Head of caudate nucleus (tissue), 42 donors: ENCODE measurements at regions of chr11 and their contacts with region 1.

Region 1: DNA sequence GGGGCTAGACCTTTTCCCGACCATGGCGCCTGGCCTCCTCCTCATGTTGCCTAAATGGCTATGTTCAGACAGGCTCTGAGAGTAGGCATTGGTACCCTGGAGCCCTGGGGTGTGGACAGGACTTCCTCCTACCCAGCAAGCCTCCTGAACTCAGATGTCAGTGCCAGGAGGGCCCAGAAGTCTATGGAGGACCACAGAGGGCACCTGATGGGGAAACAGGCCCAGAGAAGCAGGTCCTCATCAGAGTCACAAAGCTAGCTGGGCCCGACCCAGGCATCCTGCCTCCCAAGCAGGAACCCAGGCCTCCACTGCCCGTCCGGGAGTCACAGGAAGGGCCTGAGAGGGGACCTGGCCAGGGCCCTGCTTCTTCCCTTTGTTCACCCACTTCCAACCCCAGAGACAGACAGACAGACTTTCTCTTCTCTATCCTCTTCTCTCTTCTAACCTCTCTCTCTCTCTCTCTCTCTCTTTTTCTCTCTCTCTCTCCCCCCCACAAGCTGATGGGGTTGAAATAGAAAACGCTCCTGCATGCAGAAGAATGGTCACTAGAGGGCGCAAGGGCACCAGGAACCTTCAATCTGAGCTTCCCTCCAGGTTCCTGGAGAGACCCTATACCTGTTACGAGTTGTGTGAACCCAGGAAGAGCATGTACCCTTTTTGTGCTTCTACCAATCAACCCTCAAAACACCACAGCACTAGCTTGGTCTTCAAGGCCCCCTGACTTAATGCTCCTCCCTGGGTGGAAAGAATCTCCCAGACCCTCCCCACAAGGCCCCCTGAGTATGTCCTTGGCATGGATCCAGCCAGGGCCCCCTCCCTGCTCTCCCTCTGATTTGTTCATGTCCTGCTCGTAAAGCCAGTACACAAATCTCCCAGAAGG is 27.1 kb downstream of the ARAP1 start:
- DNase-seq: peak in 41 of 42 donors; percentile 59 to 93 (median 81)

Region 2: DNA sequence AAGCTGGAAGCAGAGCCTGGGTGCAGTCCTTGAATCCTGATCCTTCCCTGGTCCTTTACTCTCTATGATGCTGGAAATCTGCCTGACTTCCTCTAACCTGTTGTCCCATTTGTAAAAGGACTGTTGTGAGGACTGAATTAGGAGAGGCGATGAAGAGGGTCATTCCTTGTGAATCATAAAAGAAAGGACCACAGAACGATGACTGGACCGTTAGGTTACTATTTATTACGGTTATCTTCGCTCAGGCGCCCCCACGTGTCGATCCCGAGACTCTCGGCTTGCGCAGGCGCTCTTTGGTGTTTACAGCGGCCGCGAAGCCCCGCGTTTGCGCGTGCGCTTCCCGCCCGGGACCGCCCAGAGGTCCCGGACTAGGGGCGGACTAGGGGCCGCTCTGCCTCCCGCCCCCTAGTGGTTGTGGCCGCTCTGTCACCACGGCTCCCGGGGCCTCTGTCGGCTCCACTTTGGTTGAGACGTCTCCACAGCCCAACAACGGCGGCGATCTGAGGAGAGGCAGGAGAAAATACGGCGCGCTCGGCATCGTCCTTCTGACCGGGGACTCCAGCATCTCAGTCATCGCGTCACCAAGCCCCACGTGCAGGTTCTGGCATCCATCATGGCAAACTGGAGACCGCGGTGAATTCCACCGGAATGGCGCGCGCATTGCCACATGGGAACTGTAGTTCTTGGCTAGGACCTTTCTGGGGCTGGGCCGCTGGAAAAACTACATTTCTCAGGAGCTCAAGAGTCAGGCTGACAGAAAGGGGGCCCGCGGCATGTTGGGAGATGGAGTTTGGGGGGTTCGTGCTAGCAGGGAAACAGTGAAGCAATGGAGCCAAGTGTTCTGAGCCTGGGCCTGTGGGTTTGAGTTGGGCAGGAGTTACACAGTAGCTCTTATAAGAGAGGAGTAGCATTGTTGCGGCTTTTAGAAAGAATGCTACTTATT is 68.6 kb after region 1 on chr11 and contains the start of gene STARD10:
- intact Hi-C with region 1: loop called (anchors 2 kb)
- DNase-seq: peak; percentile 92 to 99 (median 97)

Region 3: GRCh38 chr11:73085189-73085875 is 360.2 kb after region 1 on chr11:
- intact Hi-C with region 1: no loop called
- DNase-seq: peak in 1 of 42 donors; percentile 15